Activated CD4-positive, alpha-beta memory T cell treated with anti-CD3 and anti-CD28 coated beads for 36 hours (primary cell): ENCODE measurements at regions of chr9 and their contacts with region 1.

Region 1: DNA sequence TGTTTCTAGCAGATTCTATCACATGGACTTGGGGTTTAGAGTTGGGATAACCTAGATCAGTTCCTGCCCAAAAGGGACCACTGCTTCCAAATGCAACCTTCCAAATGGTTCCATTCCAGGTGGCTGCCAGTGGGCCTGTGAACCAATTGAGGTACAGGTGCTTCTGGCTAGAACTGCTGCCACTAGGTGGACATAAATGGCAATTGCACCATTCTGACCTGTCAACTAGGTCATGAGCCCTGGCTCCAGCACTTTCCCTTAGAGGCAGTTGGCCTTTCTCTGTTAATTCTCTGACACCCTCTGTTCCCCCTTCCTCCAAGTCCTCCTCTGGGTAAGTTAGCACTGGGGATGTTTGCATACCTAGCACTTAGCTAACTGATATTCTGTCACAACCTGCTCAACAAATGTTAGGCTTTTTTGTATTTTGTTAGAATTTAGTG is 16.6 kb upstream of the HEMGN start:
- DNase-seq: peak; percentile 66
- H3K4me3 Mint-ChIP-seq: no peak overlapping the region
- H3K27ac Mint-ChIP-seq: no peak overlapping the region
- H3K4me1 Mint-ChIP-seq: peaks cover 4% of the 10 kb centered on the region
- H3K27me3 Mint-ChIP-seq: no peaks in the 10 kb centered on the region

Region 2: GRCh38 chr9:97717866-97718265 is 236.7 kb before region 1 on chr9:
- CTCF ChIA-PET with region 1: no interaction called
- POLR2A ChIA-PET with region 1: no interaction called
- intact Hi-C with region 1: no loop called
- DNase-seq: no peak
- H3K4me3 Mint-ChIP-seq: no peak overlapping the region
- H3K27ac Mint-ChIP-seq: no peak overlapping the region
- H3K4me1 Mint-ChIP-seq: peaks cover 9% of the 10 kb centered on the region
- H3K27me3 Mint-ChIP-seq: peaks cover 2% of the 10 kb centered on the region

Region 3: GRCh38 chr9:97740848-97741821 is 213.4 kb before region 1 on chr9:
- CTCF ChIA-PET with region 1: no interaction called
- POLR2A ChIA-PET with region 1: no interaction called
- intact Hi-C with region 1: no loop called
- DNase-seq: peak; percentile 54
- H3K4me3 Mint-ChIP-seq: peak overlapping the region; percentile 39
- H3K27ac Mint-ChIP-seq: no peak overlapping the region
- H3K4me1 Mint-ChIP-seq: peaks cover 6% of the 10 kb centered on the region
- H3K27me3 Mint-ChIP-seq: peaks cover 58% of the 10 kb centered on the region

Region 4: GRCh38 chr9:97830884-97831829 is 123.4 kb before region 1 on chr9:
- CTCF ChIA-PET with region 1: no interaction called
- POLR2A ChIA-PET with region 1: no interaction called
- intact Hi-C with region 1: no loop called
- DNase-seq: no peak
- H3K4me3 Mint-ChIP-seq: no peak overlapping the region
- H3K27ac Mint-ChIP-seq: no peak overlapping the region
- H3K4me1 Mint-ChIP-seq: no peaks in the 10 kb centered on the region
- H3K27me3 Mint-ChIP-seq: peaks cover 3% of the 10 kb centered on the region

Region 5: GRCh38 chr9:97930972-97931371 is 23.6 kb before region 1 on chr9:
- CTCF ChIA-PET with region 1: interaction called, 10 read pairs
- POLR2A ChIA-PET with region 1: no interaction called
- intact Hi-C with region 1: no loop called
- DNase-seq: no peak
- H3K4me3 Mint-ChIP-seq: peak overlapping the region; percentile 53
- H3K27ac Mint-ChIP-seq: peak overlapping the region; percentile 84
- H3K4me1 Mint-ChIP-seq: peaks cover 39% of the 10 kb centered on the region
- H3K27me3 Mint-ChIP-seq: no peaks in the 10 kb centered on the region

Region 6: GRCh38 chr9:97943308-97943855 is 11.2 kb before region 1 on chr9:
- CTCF ChIA-PET with region 1: interaction called, 10 read pairs
- POLR2A ChIA-PET with region 1: no interaction called
- intact Hi-C with region 1: no loop called
- DNase-seq: no peak
- H3K4me3 Mint-ChIP-seq: no peak overlapping the region
- H3K27ac Mint-ChIP-seq: no peak overlapping the region
- H3K4me1 Mint-ChIP-seq: peaks cover 6% of the 10 kb centered on the region
- H3K27me3 Mint-ChIP-seq: no peaks in the 10 kb centered on the region